ENCODE measurements at regions of chr16 and their contacts with region 1.

Region 1: GRCh38 chr16:87950765-87951549 is at the start of gene BANP:
- DNase-seq: peak; percentile 92 to 99 (median 96)
- ATAC-seq: peak; percentile 92
- H3K4me3 ChIP-seq: peak within 1 kb of the TSS; percentile 92
- H3K4me3 Mint-ChIP-seq: peak within 1 kb of the TSS; percentile 100
- H3K27ac ChIP-seq: peak within 1 kb of the TSS; percentile 88 to 98
- H3K27ac Mint-ChIP-seq: peak within 1 kb of the TSS; percentile 99
- H3K4me1 ChIP-seq: peaks cover 55% of the 10 kb centered on the region
- H3K4me1 Mint-ChIP-seq: peaks cover 42% of the 10 kb centered on the region
- H3K27me3 ChIP-seq: no peaks in the 10 kb centered on the region
- H3K27me3 Mint-ChIP-seq: no peaks in the 10 kb centered on the region
- CTCF ChIP-seq: peak; percentile 31
- total RNA-seq, gene BANP: 57.5 to 58.6 TPM

Region 2: GRCh38 chr16:86554917-86555703 is 1395.8 kb before region 1 on chr16 and contains the start of gene MTHFSD:
- CTCF ChIA-PET with region 1: no interaction called
- POLR2A ChIA-PET with region 1: no interaction called
- intact Hi-C with region 1: loop called in 1 of 2 experiments (anchors 10 kb)
- DNase-seq: peak; percentile 90 to 99 (median 96)
- ATAC-seq: peak; percentile 93
- H3K4me3 ChIP-seq: peak within 1 kb of the TSS; percentile 96
- H3K4me3 Mint-ChIP-seq: peak within 1 kb of the TSS; percentile 99
- H3K27ac ChIP-seq: peak within 1 kb of the TSS; percentile 77 to 93
- H3K27ac Mint-ChIP-seq: peak within 1 kb of the TSS; percentile 99
- H3K4me1 ChIP-seq: peaks cover 22% of the 10 kb centered on the region
- H3K4me1 Mint-ChIP-seq: peaks cover 29% of the 10 kb centered on the region
- H3K27me3 ChIP-seq: peaks cover 3 to 16% of the 10 kb centered on the region in 2 experiments
- H3K27me3 Mint-ChIP-seq: peaks cover 23% of the 10 kb centered on the region
- CTCF ChIP-seq: no peak
- total RNA-seq, gene MTHFSD: 7.3 to 7.9 TPM

Region 3: GRCh38 chr16:87387942-87388817 is 562.8 kb before region 1 on chr16:
- CTCF ChIA-PET with region 1: no interaction called
- POLR2A ChIA-PET with region 1: interaction called, 8 read pairs
- intact Hi-C with region 1: loop called in 1 of 2 experiments (anchors 5 kb)
- DNase-seq: peak; percentile 74 to 97 (median 82)
- ATAC-seq: peak; percentile 71
- H3K4me3 ChIP-seq: peak overlapping the region; percentile 8
- H3K4me3 Mint-ChIP-seq: peak overlapping the region; percentile 79
- H3K27ac ChIP-seq: peak overlapping the region; percentile 70 to 82
- H3K27ac Mint-ChIP-seq: peak overlapping the region; percentile 98
- H3K4me1 ChIP-seq: peaks cover 49% of the 10 kb centered on the region
- H3K4me1 Mint-ChIP-seq: peaks cover 49% of the 10 kb centered on the region
- H3K27me3 ChIP-seq: no peaks in the 10 kb centered on the region
- H3K27me3 Mint-ChIP-seq: peaks cover 4% of the 10 kb centered on the region
- CTCF ChIP-seq: no peak

Region 4: GRCh38 chr16:87507351-87508069 is 443.4 kb before region 1 on chr16:
- CTCF ChIA-PET with region 1: no interaction called
- POLR2A ChIA-PET with region 1: no interaction called
- intact Hi-C with region 1: no loop called
- DNase-seq: no peak
- ATAC-seq: no peak
- H3K4me3 ChIP-seq: no peak overlapping the region
- H3K4me3 Mint-ChIP-seq: no peak overlapping the region
- H3K27ac ChIP-seq: no peak overlapping the region
- H3K27ac Mint-ChIP-seq: no peak overlapping the region
- H3K4me1 ChIP-seq: peaks cover 3% of the 10 kb centered on the region
- H3K4me1 Mint-ChIP-seq: peaks cover 7% of the 10 kb centered on the region
- H3K27me3 ChIP-seq: no peaks in the 10 kb centered on the region
- H3K27me3 Mint-ChIP-seq: peaks cover 48% of the 10 kb centered on the region
- CTCF ChIP-seq: no peak

Region 5: GRCh38 chr16:87765776-87766484 is 185.0 kb before region 1 on chr16 and contains the start of gene KLHDC4:
- CTCF ChIA-PET with region 1: no interaction called
- POLR2A ChIA-PET with region 1: interaction called, 20 read pairs
- intact Hi-C with region 1: loop called in 1 of 2 experiments (anchors 1 kb)
- DNase-seq: peak; percentile 79 to 94 (median 86)
- ATAC-seq: peak; percentile 74
- H3K4me3 ChIP-seq: peak within 1 kb of the TSS; percentile 95
- H3K4me3 Mint-ChIP-seq: peak within 1 kb of the TSS; percentile 99
- H3K27ac ChIP-seq: peak within 1 kb of the TSS; percentile 95
- H3K27ac Mint-ChIP-seq: peak within 1 kb of the TSS; percentile 97
- H3K4me1 ChIP-seq: peaks cover 49% of the 10 kb centered on the region
- H3K4me1 Mint-ChIP-seq: peaks cover 40% of the 10 kb centered on the region
- H3K27me3 ChIP-seq: no peaks in the 10 kb centered on the region
- H3K27me3 Mint-ChIP-seq: no peaks in the 10 kb centered on the region
- CTCF ChIP-seq: no peak
- total RNA-seq, gene KLHDC4: 41.4 to 43.0 TPM

Region 6: GRCh38 chr16:87963400-87963799 is 12.4 kb after region 1 on chr16:
- CTCF ChIA-PET with region 1: interaction called, 3 read pairs
- POLR2A ChIA-PET with region 1: interaction called, 13 read pairs
- intact Hi-C with region 1: no loop called
- DNase-seq: peak in 12 of 14 experiments; percentile 23 to 76 (median 52)
- ATAC-seq: peak; percentile 90
- H3K4me3 ChIP-seq: no peak overlapping the region
- H3K4me3 Mint-ChIP-seq: peak overlapping the region; percentile 59
- H3K27ac ChIP-seq: peak overlapping the region in 1 of 2 donors; percentile 40
- H3K27ac Mint-ChIP-seq: peak overlapping the region; percentile 83
- H3K4me1 ChIP-seq: peaks cover 55% of the 10 kb centered on the region
- H3K4me1 Mint-ChIP-seq: peaks cover 79% of the 10 kb centered on the region
- H3K27me3 ChIP-seq: no peaks in the 10 kb centered on the region
- H3K27me3 Mint-ChIP-seq: no peaks in the 10 kb centered on the region
- CTCF ChIP-seq: no peak

Region 7: DNA sequence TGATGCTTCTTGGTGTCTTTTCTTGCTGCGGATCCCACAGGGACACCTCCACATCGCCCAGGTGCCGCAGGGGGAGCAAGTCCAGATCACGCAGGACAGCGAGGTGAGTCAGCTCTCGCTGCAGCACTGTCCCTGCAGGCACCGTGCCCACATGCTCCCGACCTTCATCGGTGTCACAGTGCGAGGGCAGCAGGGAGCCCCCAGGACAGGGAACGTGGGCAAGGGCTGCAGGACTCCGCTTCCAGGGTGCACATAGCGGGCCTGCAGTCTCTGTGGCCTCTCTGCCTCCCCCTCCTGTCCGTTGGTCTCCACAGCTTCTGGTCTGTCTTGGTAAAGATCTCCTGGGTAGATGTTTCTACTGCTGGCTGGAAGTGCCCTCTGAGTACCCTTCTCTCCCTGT is 84.3 kb after region 1 on chr16:
- CTCF ChIA-PET with region 1: no interaction called
- POLR2A ChIA-PET with region 1: no interaction called
- intact Hi-C with region 1: no loop called
- DNase-seq: no peak
- ATAC-seq: no peak
- H3K4me3 ChIP-seq: no peak overlapping the region
- H3K4me3 Mint-ChIP-seq: no peak overlapping the region
- H3K27ac ChIP-seq: no peak overlapping the region
- H3K27ac Mint-ChIP-seq: no peak overlapping the region
- H3K4me1 ChIP-seq: no peaks in the 10 kb centered on the region
- H3K4me1 Mint-ChIP-seq: no peaks in the 10 kb centered on the region
- H3K27me3 ChIP-seq: no peaks in the 10 kb centered on the region
- H3K27me3 Mint-ChIP-seq: no peaks in the 10 kb centered on the region
- CTCF ChIP-seq: no peak

Region 8: GRCh38 chr16:88533932-88534732 is 583.2 kb after region 1 on chr16:
- CTCF ChIA-PET with region 1: no interaction called
- POLR2A ChIA-PET with region 1: no interaction called
- intact Hi-C with region 1: loop called in 1 of 2 experiments (anchors 10 kb)
- DNase-seq: peak; percentile 60 to 90 (median 77)
- ATAC-seq: peak; percentile 79
- H3K4me3 ChIP-seq: peak overlapping the region; percentile 25
- H3K4me3 Mint-ChIP-seq: no peak overlapping the region
- H3K27ac ChIP-seq: no peak overlapping the region
- H3K27ac Mint-ChIP-seq: peak overlapping the region; percentile 68
- H3K4me1 ChIP-seq: peaks cover 10% of the 10 kb centered on the region
- H3K4me1 Mint-ChIP-seq: peaks cover 11% of the 10 kb centered on the region
- H3K27me3 ChIP-seq: peaks cover 0 to under 1% of the 10 kb centered on the region in 2 experiments
- H3K27me3 Mint-ChIP-seq: no peaks in the 10 kb centered on the region
- CTCF ChIP-seq: no peak

Region 9: DNA sequence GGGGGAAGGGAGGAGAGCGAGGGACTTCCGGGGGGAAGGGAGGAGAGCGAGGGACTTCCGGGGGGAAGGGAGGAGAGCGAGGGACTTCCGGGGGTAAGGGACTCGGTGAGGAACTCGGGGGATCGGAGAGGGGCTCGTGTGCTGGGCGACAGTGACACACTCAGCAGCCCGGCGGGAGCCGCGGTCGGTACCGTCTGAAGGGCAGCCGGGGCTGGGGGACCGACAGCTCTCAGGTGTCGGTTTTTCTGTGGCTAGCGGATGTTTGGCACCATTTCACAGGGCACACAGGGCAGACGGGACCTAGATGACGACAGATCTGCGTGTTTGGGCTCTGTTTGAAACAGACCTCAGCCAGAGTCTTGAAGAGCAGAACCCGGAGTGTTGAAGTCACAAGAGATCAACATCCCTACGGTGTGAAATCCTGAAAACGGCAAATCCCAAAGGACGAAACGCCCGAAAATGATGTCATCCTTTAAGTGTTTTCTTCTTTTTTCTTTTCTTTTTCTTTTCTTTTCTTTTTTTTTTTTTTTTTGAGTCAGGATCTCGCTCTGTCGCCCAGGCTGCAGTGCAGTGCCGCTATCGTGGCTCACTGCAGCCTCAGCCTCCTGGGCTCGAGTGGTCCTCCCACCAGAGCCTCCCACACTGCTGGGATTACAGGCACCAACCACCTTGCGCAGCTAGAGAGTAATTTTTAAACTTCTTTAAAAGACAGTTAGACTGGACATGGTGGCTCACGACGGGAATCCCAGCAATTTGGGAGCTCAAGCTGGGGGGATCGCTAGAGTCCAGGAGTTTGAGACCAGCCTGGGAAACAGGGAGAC is 1290.4 kb after region 1 on chr16:
- CTCF ChIA-PET with region 1: no interaction called
- POLR2A ChIA-PET with region 1: no interaction called
- intact Hi-C with region 1: loop called in 1 of 2 experiments (anchors 10 kb)
- DNase-seq: peak; percentile 62 to 96 (median 78)
- ATAC-seq: peak; percentile 84
- H3K4me3 ChIP-seq: peak overlapping the region; percentile 67
- H3K4me3 Mint-ChIP-seq: peak overlapping the region; percentile 92
- H3K27ac ChIP-seq: peak overlapping the region; percentile 90 to 97
- H3K27ac Mint-ChIP-seq: peak overlapping the region; percentile 97
- H3K4me1 ChIP-seq: peaks cover 25% of the 10 kb centered on the region
- H3K4me1 Mint-ChIP-seq: peaks cover 16% of the 10 kb centered on the region
- H3K27me3 ChIP-seq: no peaks in the 10 kb centered on the region
- H3K27me3 Mint-ChIP-seq: no peaks in the 10 kb centered on the region
- CTCF ChIP-seq: no peak